ENCODE measurements at regions of chr1 and their contacts with region 1.

Region 1: DNA sequence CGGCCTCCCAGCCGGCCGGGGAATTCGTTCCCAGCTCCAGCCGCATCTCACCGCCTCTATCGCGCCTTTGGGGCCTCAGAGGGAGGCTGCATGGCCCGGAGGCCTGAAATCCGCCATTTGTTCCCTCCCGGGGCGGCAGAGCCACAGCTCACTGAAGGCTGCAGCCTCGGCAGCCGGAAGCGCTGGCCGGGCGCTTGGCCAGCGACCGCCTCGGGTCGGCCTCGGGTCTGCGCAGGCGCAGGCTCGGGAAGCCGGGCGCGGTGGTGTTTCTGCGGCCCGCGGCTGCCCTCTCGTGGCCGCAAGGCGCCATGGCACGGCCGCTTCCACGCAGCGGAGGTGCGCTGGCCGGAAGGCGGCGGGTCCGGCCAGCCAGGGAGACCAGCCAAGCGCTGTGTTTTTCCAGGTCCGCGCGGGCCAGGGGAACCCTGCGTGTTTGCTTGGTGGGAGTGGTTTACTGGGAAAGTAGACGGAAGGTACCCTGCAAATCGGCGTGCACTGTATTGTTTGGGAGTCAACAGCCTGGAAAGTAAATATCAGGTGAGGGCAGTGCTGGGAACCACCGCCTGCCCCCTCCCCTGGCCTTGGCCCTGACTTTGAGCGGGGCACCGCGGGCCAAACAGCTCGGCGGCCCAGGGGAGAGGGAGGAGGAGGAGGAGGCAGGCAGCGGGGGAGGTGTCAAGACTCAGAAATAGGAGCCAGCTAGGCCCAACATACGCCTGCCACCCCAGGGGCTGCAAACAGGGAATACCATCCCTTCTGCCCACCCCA is 52.7 kb upstream of the CD34 start:
- DNase-seq: peak; percentile 38
- ATAC-seq: peak; percentile 96
- H3K4me3 ChIP-seq: peak overlapping the region; percentile 58
- H3K27ac ChIP-seq: peak overlapping the region; percentile 58
- H3K4me1 ChIP-seq: peaks cover 4% of the 10 kb centered on the region; the same call in 1 of the 2 replicates
- H3K27me3 ChIP-seq: peaks cover 5 to 14% of the 10 kb centered on the region in 2 experiments
- CTCF ChIP-seq: peak; percentile 88 to 100 (median 94); a peak in 5 of 6 replicates
- EP300 ChIP-seq: no peak
- POLR2A ChIP-seq: peak; percentile 94
- RAD21 ChIP-seq: peak; percentile 89

Region 2: DNA sequence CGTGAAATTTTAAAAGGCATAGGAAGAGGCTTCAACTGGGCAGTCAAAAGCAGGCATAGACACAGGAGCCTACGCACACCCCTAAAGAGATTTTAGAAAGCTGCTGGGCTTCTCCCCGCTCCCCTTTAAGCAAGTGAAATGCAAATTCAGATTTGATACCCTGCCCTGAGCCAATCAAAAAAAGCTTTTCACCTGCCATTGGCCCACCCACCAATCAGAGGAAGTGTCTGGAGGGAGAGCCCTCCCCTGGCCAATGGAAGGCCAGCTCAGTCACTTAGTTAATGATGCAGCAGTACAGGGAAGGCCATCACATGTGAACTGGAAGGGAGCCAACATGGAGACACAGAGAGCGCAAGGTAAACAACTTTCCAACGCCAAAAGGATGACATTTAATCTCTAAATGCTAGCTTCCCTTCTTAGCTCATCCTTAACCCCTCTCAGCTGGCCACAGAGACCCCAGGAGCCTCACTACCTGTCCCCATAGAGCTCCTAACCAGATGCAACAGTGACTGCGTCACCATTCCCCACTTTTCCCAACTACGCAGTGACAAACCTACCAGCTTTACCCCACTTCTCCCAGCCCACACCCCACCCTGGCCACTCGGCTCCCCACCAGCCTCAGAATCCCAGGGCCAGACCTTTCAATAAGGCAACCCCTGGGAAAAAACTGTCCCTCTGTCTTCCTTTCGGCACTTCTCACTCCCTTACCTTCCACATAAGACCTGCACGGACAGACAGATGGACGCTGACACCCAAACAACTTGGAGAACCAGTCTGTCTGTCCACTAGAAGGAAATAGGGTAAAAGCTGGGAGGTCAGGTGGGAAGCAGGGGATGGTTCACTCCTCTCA is 140.8 kb before region 1 on chr1:
- CTCF ChIA-PET with region 1: interaction called, 19 read pairs
- POLR2A ChIA-PET with region 1: interaction called, 3 read pairs
- RAD21 ChIA-PET with region 1: interaction called, 25 read pairs
- SMC1A ChIA-PET with region 1: interaction called, 8 read pairs
- in situ Hi-C with region 1: loop called (anchors 10 kb)
- intact Hi-C with region 1: loop called (anchors 1 kb)
- DNase-seq: peak; percentile 96
- ATAC-seq: peak; percentile 77
- H3K4me3 ChIP-seq: peak overlapping the region; percentile 93
- H3K27ac ChIP-seq: peak overlapping the region; percentile 95
- H3K4me1 ChIP-seq: peaks cover 34% of the 10 kb centered on the region
- H3K27me3 ChIP-seq: no peaks in the 10 kb centered on the region
- CTCF ChIP-seq: no peak
- EP300 ChIP-seq: 0 out of 4 replicates have a peak, but pooled peaks have one; percentile 9 to 26
- POLR2A ChIP-seq: peak; percentile 80; the same call in 1 of the 2 replicates
- RAD21 ChIP-seq: no peak

Region 3: DNA sequence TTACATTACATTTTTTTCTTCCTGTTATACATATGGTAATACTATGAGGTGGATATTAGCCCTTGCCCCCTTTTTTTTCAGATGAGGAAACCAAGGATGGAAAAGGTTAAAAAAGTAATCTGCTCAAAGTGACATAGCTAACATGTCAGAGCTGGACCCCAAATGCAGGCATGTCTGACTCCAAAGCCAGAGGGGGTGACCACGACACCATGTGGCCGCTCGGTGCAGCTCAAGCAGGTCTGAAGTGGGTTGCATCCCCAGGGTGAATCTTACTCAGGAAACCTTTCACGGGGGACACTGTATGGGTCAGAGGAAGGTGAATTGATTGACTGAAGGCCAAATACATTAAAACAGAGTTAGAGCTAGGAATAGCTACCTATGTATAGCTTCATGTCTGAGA is 87.5 kb before region 1 on chr1:
- CTCF ChIA-PET with region 1: interaction called, 228 read pairs
- POLR2A ChIA-PET with region 1: no interaction called
- RAD21 ChIA-PET with region 1: interaction called, 9 read pairs
- SMC1A ChIA-PET with region 1: interaction called, 11 read pairs
- in situ Hi-C with region 1: no loop called
- intact Hi-C with region 1: no loop called
- DNase-seq: no peak
- ATAC-seq: peak; percentile 45; the same call in 2 of the 3 replicates
- H3K4me3 ChIP-seq: no peak overlapping the region
- H3K27ac ChIP-seq: no peak overlapping the region
- H3K4me1 ChIP-seq: peaks cover 20% of the 10 kb centered on the region
- H3K27me3 ChIP-seq: no peaks in the 10 kb centered on the region
- CTCF ChIP-seq: peak in 2 of 3 experiments; percentile 21 to 38; a peak in 3 of 6 replicates
- EP300 ChIP-seq: no peak
- POLR2A ChIP-seq: no peak
- RAD21 ChIP-seq: peak; percentile 46

Region 4: GRCh38 chr1:207918011-207918410 is 45.6 kb before region 1 on chr1:
- CTCF ChIA-PET with region 1: interaction called, 10 read pairs
- POLR2A ChIA-PET with region 1: no interaction called
- RAD21 ChIA-PET with region 1: interaction called, 4 read pairs
- SMC1A ChIA-PET with region 1: interaction called, 4 read pairs
- in situ Hi-C with region 1: no loop called
- intact Hi-C with region 1: no loop called
- DNase-seq: no peak
- ATAC-seq: no peak
- H3K4me3 ChIP-seq: no peak overlapping the region
- H3K27ac ChIP-seq: no peak overlapping the region
- H3K4me1 ChIP-seq: no peaks in the 10 kb centered on the region
- H3K27me3 ChIP-seq: peaks cover 0 to 14% of the 10 kb centered on the region in 2 experiments
- CTCF ChIP-seq: no peak
- EP300 ChIP-seq: no peak
- POLR2A ChIP-seq: no peak
- RAD21 ChIP-seq: no peak

Region 5: GRCh38 chr1:207946756-207947155 is 16.9 kb before region 1 on chr1:
- CTCF ChIA-PET with region 1: interaction called, 20 read pairs
- POLR2A ChIA-PET with region 1: interaction called, 3 read pairs
- RAD21 ChIA-PET with region 1: interaction called, 7 read pairs
- SMC1A ChIA-PET with region 1: interaction called, 10 read pairs
- in situ Hi-C with region 1: no loop called
- intact Hi-C with region 1: no loop called
- DNase-seq: no peak
- ATAC-seq: no peak
- H3K4me3 ChIP-seq: no peak overlapping the region
- H3K27ac ChIP-seq: no peak overlapping the region
- H3K4me1 ChIP-seq: no peaks in the 10 kb centered on the region
- H3K27me3 ChIP-seq: peaks cover 1 to 3% of the 10 kb centered on the region in 2 experiments; a peak in 2 of 4 replicates
- CTCF ChIP-seq: no peak
- EP300 ChIP-seq: no peak
- POLR2A ChIP-seq: no peak
- RAD21 ChIP-seq: no peak

Measured in GM12878 (cell line).